ENCODE measurements at regions of chr17 and their contacts with region 1.

Region 1: GRCh38 chr17:77451245-77451893 is 310.6 kb downstream of the SEC14L1 start:
- DNase-seq: peak; percentile 83
- H3K4me3 Mint-ChIP-seq: peak overlapping the region; percentile 91
- H3K27ac Mint-ChIP-seq: peak overlapping the region; percentile 100
- H3K4me1 Mint-ChIP-seq: peaks cover 41% of the 10 kb centered on the region
- H3K27me3 Mint-ChIP-seq: no peaks in the 10 kb centered on the region

Region 2: GRCh38 chr17:76737082-76737675 is 714.2 kb before region 1 on chr17 and contains the start of gene SRSF2:
- CTCF ChIA-PET with region 1: no interaction called
- POLR2A ChIA-PET with region 1: no interaction called
- intact Hi-C with region 1: loop called (anchors 5 kb)
- DNase-seq: peak; percentile 99
- H3K4me3 Mint-ChIP-seq: peak within 1 kb of the TSS; percentile 95
- H3K27ac Mint-ChIP-seq: peak within 1 kb of the TSS; percentile 100
- H3K4me1 Mint-ChIP-seq: peaks cover 46% of the 10 kb centered on the region
- H3K27me3 Mint-ChIP-seq: no peaks in the 10 kb centered on the region
- total RNA-seq, gene SRSF2: 299 TPM

Region 3: GRCh38 chr17:77280980-77281903 is 170.1 kb before region 1 on chr17:
- CTCF ChIA-PET with region 1: no interaction called
- POLR2A ChIA-PET with region 1: no interaction called
- intact Hi-C with region 1: no loop called
- DNase-seq: peak; percentile 65
- H3K4me3 Mint-ChIP-seq: peak overlapping the region; percentile 70
- H3K27ac Mint-ChIP-seq: peak overlapping the region; percentile 69
- H3K4me1 Mint-ChIP-seq: peaks cover 16% of the 10 kb centered on the region
- H3K27me3 Mint-ChIP-seq: peaks cover 22% of the 10 kb centered on the region

Region 4: DNA sequence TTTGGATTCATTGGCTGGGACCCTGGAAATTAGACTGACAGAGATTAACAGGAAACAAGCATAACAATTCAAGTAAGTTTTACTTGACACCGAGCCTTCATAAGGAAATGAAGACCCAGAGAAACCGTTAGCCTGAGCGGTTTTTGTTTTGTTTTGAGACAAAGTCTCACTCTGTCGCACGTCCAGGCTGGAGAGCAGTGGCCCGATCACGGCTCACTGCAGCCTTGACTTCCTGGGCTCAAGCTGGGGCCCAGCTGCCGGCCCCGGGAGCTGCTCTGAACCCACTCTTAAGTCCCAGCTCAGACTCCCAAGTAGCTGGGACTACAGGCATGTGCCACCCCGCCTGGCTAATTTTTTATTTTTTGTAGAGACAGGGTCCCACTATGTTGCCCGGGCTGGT is 10.7 kb after region 1 on chr17:
- CTCF ChIA-PET with region 1: interaction called, 4 read pairs
- POLR2A ChIA-PET with region 1: interaction called, 43 read pairs
- intact Hi-C with region 1: loop called (anchors 1 kb)
- DNase-seq: peak; percentile 72
- H3K4me3 Mint-ChIP-seq: peak overlapping the region; percentile 91
- H3K27ac Mint-ChIP-seq: peak overlapping the region; percentile 100
- H3K4me1 Mint-ChIP-seq: peaks cover 83% of the 10 kb centered on the region
- H3K27me3 Mint-ChIP-seq: no peaks in the 10 kb centered on the region

Region 5: GRCh38 chr17:77471984-77472461 is 20.7 kb after region 1 on chr17:
- CTCF ChIA-PET with region 1: interaction called, 11 read pairs
- POLR2A ChIA-PET with region 1: interaction called, 114 read pairs
- intact Hi-C with region 1: no loop called
- DNase-seq: peak; percentile 32
- H3K4me3 Mint-ChIP-seq: peak overlapping the region; percentile 62
- H3K27ac Mint-ChIP-seq: peak overlapping the region; percentile 86
- H3K4me1 Mint-ChIP-seq: peaks cover 97% of the 10 kb centered on the region
- H3K27me3 Mint-ChIP-seq: no peaks in the 10 kb centered on the region

Region 6: GRCh38 chr17:77881545-77881944 is 430.2 kb after region 1 on chr17:
- CTCF ChIA-PET with region 1: no interaction called
- POLR2A ChIA-PET with region 1: no interaction called
- intact Hi-C with region 1: loop called (anchors 10 kb)
- DNase-seq: peak; percentile 87
- H3K4me3 Mint-ChIP-seq: peak overlapping the region; percentile 54
- H3K27ac Mint-ChIP-seq: peak overlapping the region; percentile 89
- H3K4me1 Mint-ChIP-seq: peaks cover 73% of the 10 kb centered on the region
- H3K27me3 Mint-ChIP-seq: no peaks in the 10 kb centered on the region

Measured in activated CD4-positive, alpha-beta memory T cell treated with anti-CD3 and anti-CD28 coated beads for 36 hours (primary cell).